G401 (cell line): ENCODE measurements at regions of chr9 and their contacts with region 1.

Region 1: DNA sequence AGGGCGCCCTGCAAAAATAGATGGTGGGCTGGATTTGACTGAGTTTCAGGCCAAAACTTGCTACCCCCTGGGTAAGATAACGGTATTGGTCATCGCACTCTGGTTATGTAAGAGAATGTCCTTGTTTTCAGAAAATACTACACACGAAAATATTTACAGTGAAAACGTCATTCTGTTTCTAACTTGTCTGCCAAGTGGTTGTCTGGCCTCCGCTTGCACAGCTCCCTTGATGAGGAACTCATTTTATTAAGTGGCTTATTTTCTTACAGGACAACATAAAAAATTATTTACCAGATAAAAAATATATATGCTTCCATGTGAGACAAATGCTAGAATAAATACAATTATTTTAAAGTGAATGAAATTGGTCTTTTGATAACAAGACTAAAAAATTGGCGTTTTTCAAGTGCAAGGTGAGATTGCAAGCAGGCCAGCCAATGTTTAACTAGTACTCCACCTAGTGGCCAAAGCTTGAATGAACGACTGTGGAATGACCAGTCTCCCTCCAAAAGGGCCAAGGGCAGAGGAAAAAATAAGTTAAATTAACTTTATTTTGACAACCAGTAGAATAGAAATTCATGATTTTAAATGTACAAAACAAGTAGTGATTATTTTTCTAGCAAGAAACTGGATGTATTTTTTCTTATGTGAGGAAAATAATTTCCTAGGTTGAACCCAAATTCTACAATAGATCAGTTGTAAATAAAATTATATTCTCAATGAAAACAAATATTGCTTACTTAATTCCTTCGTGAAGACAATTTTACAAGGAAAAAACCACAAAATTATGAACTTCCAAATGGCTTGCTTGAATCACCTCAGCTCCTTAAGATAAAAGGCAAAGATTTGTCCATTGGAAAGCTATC is 93.2 kb downstream of the ZFAND5 start:
- DNase-seq: peak; percentile 70

Region 2: DNA sequence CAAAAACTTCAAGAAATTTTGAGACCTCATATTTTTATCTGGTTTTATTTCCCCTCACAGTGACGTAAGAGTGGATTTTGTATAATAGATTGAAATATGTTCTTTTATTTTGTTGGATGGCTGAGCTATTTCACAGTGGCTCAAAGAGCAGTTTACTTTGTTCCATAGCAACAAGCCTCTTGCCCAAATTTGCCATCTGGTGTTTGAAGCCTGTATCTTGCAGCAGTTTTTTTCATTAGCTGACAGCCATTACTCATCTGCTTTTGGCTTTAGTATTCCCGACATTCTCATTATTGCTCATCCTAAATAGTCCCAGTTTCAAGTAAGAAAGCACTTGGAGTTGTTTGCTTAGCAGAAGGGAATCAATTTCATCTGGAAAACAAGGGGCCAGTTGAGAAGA is 86.3 kb before region 1 on chr9:
- in situ Hi-C with region 1: no loop called
- DNase-seq: no peak

Region 3: DNA sequence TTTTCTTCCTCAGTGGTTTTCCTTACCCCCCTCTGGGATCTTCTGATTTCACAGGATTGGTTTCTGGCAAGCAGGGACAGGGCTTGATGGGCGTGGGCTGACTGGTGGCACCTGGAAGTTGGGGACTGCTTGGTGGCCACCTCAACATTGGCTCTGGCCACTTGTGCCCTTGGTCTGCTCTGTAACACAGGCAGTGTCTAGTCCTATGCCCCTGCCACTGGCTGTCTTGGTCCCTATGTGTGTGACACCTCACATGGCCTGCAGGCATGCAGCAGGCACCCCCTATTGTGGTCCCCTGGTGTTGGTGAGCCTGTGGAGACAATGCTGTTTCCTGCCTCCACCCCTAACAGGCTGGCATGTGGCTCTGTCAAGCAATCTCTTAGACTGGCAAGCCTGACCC is 51.3 kb before region 1 on chr9:
- in situ Hi-C with region 1: loop called (anchors 5 kb)
- DNase-seq: no peak

Region 4: GRCh38 chr9:72305102-72305546 is 33.3 kb after region 1 on chr9:
- in situ Hi-C with region 1: no loop called
- DNase-seq: no peak

Region 5: GRCh38 chr9:72680593-72681282 is 408.9 kb after region 1 on chr9:
- in situ Hi-C with region 1: no loop called
- DNase-seq: no peak